ENCODE measurements at regions of chr2 and their contacts with region 1.

Region 1: DNA sequence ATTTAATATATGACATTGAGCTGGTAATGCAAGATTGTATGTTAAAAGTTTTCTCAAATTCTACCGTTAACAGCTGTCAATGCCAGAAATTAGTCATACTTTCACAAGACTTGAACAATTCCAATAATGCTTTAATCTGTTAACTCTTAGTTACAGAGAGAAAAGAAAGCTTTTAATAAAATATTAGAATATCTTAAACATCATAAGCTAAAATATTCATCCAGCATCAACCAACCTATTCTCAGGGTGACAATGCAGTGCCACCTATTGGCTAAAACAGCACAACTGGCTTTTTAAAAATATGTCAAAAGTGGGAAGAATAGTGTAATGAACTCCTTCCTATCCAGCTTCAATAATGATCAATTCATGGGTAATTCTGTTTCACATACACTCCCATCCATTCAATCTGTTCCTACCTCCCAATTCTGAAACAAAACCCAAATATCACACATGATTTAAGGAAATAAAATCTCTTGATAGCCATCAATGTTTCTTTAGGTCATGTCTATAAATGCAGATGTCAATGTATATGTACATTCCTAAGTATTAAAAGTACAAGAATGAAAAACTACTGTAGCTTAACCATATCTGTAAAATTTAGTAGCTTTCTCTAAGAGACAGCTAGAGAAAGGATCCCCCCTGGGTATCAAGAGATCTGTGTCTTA is 79.8 kb upstream of the CCDC141 start:
- DNase-seq: peak in 3 of 9 experiments; percentile 4 to 47 (median 30)
- ATAC-seq: no peak
- H3K4me3 ChIP-seq: no peak overlapping the region
- H3K4me3 Mint-ChIP-seq: no peak overlapping the region
- H3K27ac ChIP-seq: no peak overlapping the region
- H3K27ac Mint-ChIP-seq: no peak overlapping the region
- H3K4me1 ChIP-seq: no peaks in the 10 kb centered on the region
- H3K4me1 Mint-ChIP-seq: no peaks in the 10 kb centered on the region
- H3K27me3 ChIP-seq: no peaks in the 10 kb centered on the region
- H3K27me3 Mint-ChIP-seq: no peaks in the 10 kb centered on the region
- CTCF ChIP-seq: peak; percentile 73

Region 2: GRCh38 chr2:178761759-178762371 is 367.8 kb before region 1 on chr2:
- CTCF ChIA-PET with region 1: interaction called, 3 read pairs
- POLR2A ChIA-PET with region 1: no interaction called
- intact Hi-C with region 1: loop called in 1 of 2 experiments (anchors 10 kb)
- DNase-seq: peak in 4 of 9 experiments; percentile 16 to 57 (median 33)
- ATAC-seq: peak; percentile 29
- H3K4me3 ChIP-seq: no peak overlapping the region
- H3K4me3 Mint-ChIP-seq: no peak overlapping the region
- H3K27ac ChIP-seq: no peak overlapping the region
- H3K27ac Mint-ChIP-seq: no peak overlapping the region
- H3K4me1 ChIP-seq: no peaks in the 10 kb centered on the region
- H3K4me1 Mint-ChIP-seq: no peaks in the 10 kb centered on the region
- H3K27me3 ChIP-seq: no peaks in the 10 kb centered on the region
- H3K27me3 Mint-ChIP-seq: no peaks in the 10 kb centered on the region
- CTCF ChIP-seq: peak; percentile 90

Region 3: GRCh38 chr2:178891265-178891958 is 238.3 kb before region 1 on chr2:
- CTCF ChIA-PET with region 1: interaction called, 44 read pairs
- POLR2A ChIA-PET with region 1: no interaction called
- intact Hi-C with region 1: loop called (anchors 1 kb)
- DNase-seq: peak; percentile 9 to 69 (median 55)
- ATAC-seq: peak; percentile 79
- H3K4me3 ChIP-seq: no peak overlapping the region
- H3K4me3 Mint-ChIP-seq: no peak overlapping the region
- H3K27ac ChIP-seq: no peak overlapping the region
- H3K27ac Mint-ChIP-seq: no peak overlapping the region
- H3K4me1 ChIP-seq: no peaks in the 10 kb centered on the region
- H3K4me1 Mint-ChIP-seq: peaks cover 7% of the 10 kb centered on the region
- H3K27me3 ChIP-seq: no peaks in the 10 kb centered on the region
- H3K27me3 Mint-ChIP-seq: no peaks in the 10 kb centered on the region
- CTCF ChIP-seq: peak; percentile 93

Region 4: DNA sequence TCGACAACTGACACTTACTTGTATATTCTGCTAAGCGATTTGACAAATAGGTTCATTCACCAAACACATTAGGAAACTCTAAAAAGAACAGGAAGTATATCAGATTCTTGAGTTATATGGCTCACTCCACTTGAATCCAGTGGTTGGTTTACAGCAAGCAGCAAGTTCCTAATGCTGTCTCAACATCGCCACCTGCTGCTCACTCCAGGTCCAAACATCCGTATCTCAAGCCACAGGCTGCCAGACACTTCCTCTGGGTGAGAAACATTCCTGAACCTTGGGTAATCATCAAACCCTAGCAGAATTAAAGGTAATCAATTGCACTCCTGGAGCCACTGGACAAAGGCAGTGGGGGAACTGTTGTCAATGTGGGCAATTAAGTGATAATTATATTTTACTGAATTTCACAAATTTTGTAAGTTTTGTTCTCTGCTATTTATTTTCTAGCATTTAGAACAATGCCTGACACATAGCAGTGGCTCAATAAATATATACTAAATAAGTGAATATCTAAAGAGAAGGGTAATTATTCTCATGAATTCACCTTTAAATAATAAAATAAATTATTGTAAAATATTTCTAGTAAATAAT is 215.4 kb before region 1 on chr2:
- CTCF ChIA-PET with region 1: interaction called, 13 read pairs
- POLR2A ChIA-PET with region 1: no interaction called
- intact Hi-C with region 1: loop called in 1 of 2 experiments (anchors 5 kb)
- DNase-seq: peak; percentile 37 to 77 (median 66)
- ATAC-seq: peak; percentile 88
- H3K4me3 ChIP-seq: no peak overlapping the region
- H3K4me3 Mint-ChIP-seq: no peak overlapping the region
- H3K27ac ChIP-seq: no peak overlapping the region
- H3K27ac Mint-ChIP-seq: no peak overlapping the region
- H3K4me1 ChIP-seq: no peaks in the 10 kb centered on the region
- H3K4me1 Mint-ChIP-seq: peaks cover 2% of the 10 kb centered on the region
- H3K27me3 ChIP-seq: no peaks in the 10 kb centered on the region
- H3K27me3 Mint-ChIP-seq: no peaks in the 10 kb centered on the region
- CTCF ChIP-seq: peak; percentile 82

Region 5: DNA sequence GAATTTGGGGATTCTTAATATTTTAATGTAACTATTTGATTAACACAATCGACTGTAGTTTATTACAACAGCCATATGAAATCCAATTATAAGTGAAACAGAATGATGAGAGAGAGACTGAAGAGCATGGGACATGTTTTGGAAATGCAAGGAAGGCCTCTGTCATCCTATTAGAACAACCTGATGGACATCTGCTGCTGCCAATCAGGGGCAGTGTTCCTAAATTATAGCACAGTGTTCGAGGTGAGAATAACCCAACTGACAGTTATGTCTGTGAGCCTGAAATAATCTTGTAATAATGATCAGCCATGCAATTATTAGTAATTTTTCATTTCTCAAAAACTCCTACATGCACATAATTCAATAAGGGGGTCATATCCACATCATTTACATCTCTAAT is 153.4 kb before region 1 on chr2:
- CTCF ChIA-PET with region 1: interaction called, 19 read pairs
- POLR2A ChIA-PET with region 1: no interaction called
- intact Hi-C with region 1: loop called (anchors 2 to 5 kb)
- DNase-seq: no peak
- ATAC-seq: no peak
- H3K4me3 ChIP-seq: no peak overlapping the region
- H3K4me3 Mint-ChIP-seq: no peak overlapping the region
- H3K27ac ChIP-seq: no peak overlapping the region
- H3K27ac Mint-ChIP-seq: no peak overlapping the region
- H3K4me1 ChIP-seq: no peaks in the 10 kb centered on the region
- H3K4me1 Mint-ChIP-seq: no peaks in the 10 kb centered on the region
- H3K27me3 ChIP-seq: no peaks in the 10 kb centered on the region
- H3K27me3 Mint-ChIP-seq: no peaks in the 10 kb centered on the region
- CTCF ChIP-seq: no peak

Region 6: GRCh38 chr2:179239195-179239594 is 109.5 kb after region 1 on chr2:
- CTCF ChIA-PET with region 1: no interaction called
- POLR2A ChIA-PET with region 1: no interaction called
- intact Hi-C with region 1: no loop called
- DNase-seq: peak in 1 of 9 experiments; percentile 51
- ATAC-seq: peak; percentile 58
- H3K4me3 ChIP-seq: no peak overlapping the region
- H3K4me3 Mint-ChIP-seq: no peak overlapping the region
- H3K27ac ChIP-seq: no peak overlapping the region
- H3K27ac Mint-ChIP-seq: no peak overlapping the region
- H3K4me1 ChIP-seq: peaks cover 7% of the 10 kb centered on the region
- H3K4me1 Mint-ChIP-seq: peaks cover 20% of the 10 kb centered on the region
- H3K27me3 ChIP-seq: no peaks in the 10 kb centered on the region
- H3K27me3 Mint-ChIP-seq: peaks cover 2% of the 10 kb centered on the region
- CTCF ChIP-seq: no peak